Activated B cell treated with CpG ODN at 0.5 μM for 24 hours (primary cell): ENCODE measurements at regions of chr14 and their contacts with region 1.

Region 1: DNA sequence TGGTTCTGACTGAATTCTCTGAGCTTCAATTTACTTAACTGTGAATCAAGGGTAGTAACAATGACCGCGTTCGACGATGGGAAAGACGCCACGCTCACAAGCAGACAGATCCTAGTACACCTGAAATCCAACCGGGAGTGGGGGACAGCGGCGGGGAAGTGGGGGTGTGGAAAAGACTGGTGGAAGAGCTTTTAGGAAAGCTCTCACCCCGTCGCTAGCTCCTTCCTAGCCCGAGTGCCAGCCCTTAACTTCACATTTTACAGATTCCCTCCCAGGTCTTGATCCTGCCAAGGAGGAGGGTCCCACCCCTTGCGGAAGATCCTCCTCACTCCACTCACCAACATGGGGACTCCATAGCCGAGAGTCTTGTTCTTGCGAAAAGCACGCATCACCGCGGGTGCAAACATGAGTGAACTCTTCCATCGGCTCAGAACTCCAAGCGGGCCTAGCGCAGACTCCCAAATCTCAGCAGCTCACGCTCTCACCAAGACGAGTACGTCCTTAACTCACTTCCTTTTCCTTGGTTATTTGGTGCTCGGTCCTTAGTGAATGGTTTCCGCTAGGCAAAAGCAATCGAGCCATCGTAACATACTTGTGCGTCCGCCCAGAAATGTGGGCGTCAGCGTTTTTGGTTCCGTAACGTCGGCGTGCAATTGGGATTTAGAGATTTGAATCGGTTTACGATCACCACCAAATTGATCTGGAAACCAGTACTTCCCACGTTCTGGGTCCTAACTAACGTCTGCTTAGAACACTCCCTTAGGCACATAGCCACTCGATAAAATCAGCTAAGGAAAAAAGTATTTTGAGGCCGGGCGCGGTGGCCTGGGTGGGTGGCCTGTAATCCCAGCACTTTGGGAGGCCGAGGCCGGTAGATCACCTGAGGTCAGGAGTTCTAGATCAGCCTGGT is at the start of gene COX16:
- DNase-seq: peak; percentile 72
- ATAC-seq: peak; percentile 93
- H3K4me3 Mint-ChIP-seq: peak within 1 kb of the TSS; percentile 99
- H3K27ac Mint-ChIP-seq: peak within 1 kb of the TSS; percentile 92
- H3K4me1 Mint-ChIP-seq: peaks cover 42% of the 10 kb centered on the region
- H3K27me3 Mint-ChIP-seq: peaks cover 2% of the 10 kb centered on the region
- CTCF ChIP-seq: no peak
- total RNA-seq, gene COX16: 48.8 and 50.7 TPM in 2 replicates

Region 2: GRCh38 chr14:69766984-69767368 is 592.5 kb before region 1 on chr14 and contains the start of gene SRSF5:
- CTCF ChIA-PET with region 1: no interaction called
- POLR2A ChIA-PET with region 1: interaction called, 3 read pairs
- intact Hi-C with region 1: loop called (anchors 1 kb)
- DNase-seq: peak; percentile 92
- ATAC-seq: peak; percentile 78
- H3K4me3 Mint-ChIP-seq: peak within 1 kb of the TSS; percentile 98
- H3K27ac Mint-ChIP-seq: peak within 1 kb of the TSS; percentile 100
- H3K4me1 Mint-ChIP-seq: peaks cover 51% of the 10 kb centered on the region
- H3K27me3 Mint-ChIP-seq: no peaks in the 10 kb centered on the region
- CTCF ChIP-seq: no peak
- total RNA-seq, gene SRSF5: 394 and 422 TPM in 2 replicates

Region 3: GRCh38 chr14:70289138-70289537 is 70.3 kb before region 1 on chr14:
- CTCF ChIA-PET with region 1: interaction called, 3 read pairs
- POLR2A ChIA-PET with region 1: interaction called, 3 read pairs
- intact Hi-C with region 1: loop called (anchors 1 kb)
- DNase-seq: no peak
- ATAC-seq: peak; percentile 72
- H3K4me3 Mint-ChIP-seq: peak overlapping the region; percentile 48
- H3K27ac Mint-ChIP-seq: no peak overlapping the region
- H3K4me1 Mint-ChIP-seq: peaks cover 3% of the 10 kb centered on the region
- H3K27me3 Mint-ChIP-seq: peaks cover 10% of the 10 kb centered on the region
- CTCF ChIP-seq: no peak

Region 4: DNA sequence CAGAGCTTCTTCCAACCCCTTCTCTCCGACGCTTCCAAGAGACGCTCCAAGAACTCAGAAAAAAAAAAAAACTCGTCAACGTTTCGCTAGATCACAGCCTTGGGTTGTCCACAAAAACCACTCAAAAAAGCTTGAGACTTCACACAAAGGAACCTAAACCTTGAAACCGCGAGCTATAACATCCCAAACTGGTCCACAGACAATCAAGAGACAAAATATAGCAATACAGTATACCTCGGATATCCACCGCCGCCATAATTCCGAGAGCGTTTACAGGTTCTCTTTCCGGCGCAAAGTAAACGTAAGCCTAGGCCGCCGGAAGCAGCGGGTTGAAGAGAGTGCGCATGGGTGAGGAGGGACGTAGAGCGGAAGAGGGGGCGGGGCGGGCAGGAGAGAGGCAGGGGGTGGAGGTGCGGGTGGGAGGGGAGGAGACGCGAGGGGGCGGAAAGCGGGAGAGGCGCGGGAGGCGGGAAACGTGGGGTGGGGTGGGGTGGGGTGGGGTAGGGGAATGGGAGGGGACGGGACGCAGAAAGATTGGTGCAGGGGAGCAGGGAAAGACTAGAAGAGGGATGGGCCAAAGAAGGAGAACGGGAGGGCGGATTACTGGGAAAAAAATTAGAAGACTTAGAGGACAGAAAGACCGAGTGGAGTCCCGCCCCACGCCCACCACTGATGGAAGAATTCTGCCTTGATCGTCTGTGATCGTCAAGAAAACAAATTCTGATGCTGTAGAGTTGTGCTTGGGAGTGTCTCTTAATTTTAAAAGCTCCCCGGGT is 241.1 kb after region 1 on chr14 and contains the start of gene MED6:
- CTCF ChIA-PET with region 1: no interaction called
- POLR2A ChIA-PET with region 1: interaction called, 8 read pairs
- intact Hi-C with region 1: loop called (anchors 1 kb)
- DNase-seq: peak; percentile 77
- ATAC-seq: peak; percentile 99
- H3K4me3 Mint-ChIP-seq: peak within 1 kb of the TSS; percentile 99
- H3K27ac Mint-ChIP-seq: peak within 1 kb of the TSS; percentile 94
- H3K4me1 Mint-ChIP-seq: peaks cover 43% of the 10 kb centered on the region
- H3K27me3 Mint-ChIP-seq: no peaks in the 10 kb centered on the region
- CTCF ChIP-seq: no peak
- total RNA-seq, gene MED6: 50.5 and 57.0 TPM in 2 replicates